Breast epithelium (tissue), 4 donors: ENCODE measurements at regions of chr11 and their contacts with region 1.

Region 1: GRCh38 chr11:62823677-62824076 is 8.2 kb downstream of the STX5 start:
- DNase-seq: no peak
- H3K4me3 ChIP-seq: no peak overlapping the region
- H3K27ac ChIP-seq: no peak overlapping the region
- H3K4me1 ChIP-seq: no peaks in the 10 kb centered on the region
- H3K27me3 ChIP-seq: no peaks in the 10 kb centered on the region
- CTCF ChIP-seq: no peak
- POLR2A ChIP-seq: no peak

Region 2: GRCh38 chr11:63243533-63243932 is 419.9 kb after region 1 on chr11 and contains the start of gene SLC22A25:
- intact Hi-C with region 1: loop called (anchors 10 kb)
- DNase-seq: no peak
- H3K4me3 ChIP-seq: no peak within 1 kb of the TSS
- H3K27ac ChIP-seq: no peak within 1 kb of the TSS
- H3K4me1 ChIP-seq: no peaks in the 10 kb centered on the region
- H3K27me3 ChIP-seq: no peaks in the 10 kb centered on the region
- CTCF ChIP-seq: no peak
- POLR2A ChIP-seq: no peak
- total RNA-seq, gene SLC22A25: 0.48 TPM in 1 of 3 donors, not detected in the others

Region 3: DNA sequence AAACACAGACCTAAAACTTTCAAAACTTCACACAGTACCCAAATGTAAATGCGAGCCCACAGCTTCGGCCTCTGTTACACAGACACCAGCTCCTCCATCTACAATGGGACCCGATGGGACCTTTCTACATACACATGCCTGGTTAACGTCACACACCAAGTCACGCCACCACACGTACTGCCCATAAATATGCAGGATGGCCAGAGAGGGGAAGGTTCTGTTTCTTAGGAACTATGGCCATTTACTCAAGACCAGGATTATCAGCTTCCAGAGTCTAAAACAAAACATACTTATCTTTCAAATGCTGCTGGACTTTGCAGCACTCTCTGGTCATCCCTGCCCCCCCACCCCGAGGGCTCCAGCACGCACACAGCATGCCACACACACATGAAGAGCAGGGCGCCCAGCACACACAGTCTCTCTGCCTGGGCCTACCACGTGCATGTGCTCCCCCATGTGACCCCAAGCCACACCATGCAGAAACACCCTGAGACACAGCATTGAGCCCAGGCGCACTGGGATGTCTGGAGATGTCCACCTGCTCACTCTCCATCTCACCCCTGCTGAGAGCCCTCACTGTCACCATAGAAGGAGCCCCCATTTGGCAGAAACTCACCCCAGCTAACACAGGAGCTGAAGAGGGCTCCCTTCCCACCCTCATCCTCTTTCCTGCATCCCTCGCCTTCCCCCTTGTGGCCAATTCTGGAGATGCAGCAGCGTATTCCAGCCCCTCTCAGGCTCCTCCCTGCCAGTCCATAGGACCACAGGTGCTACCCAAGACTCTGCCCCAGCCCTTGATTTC is 1829.1 kb after region 1 on chr11:
- intact Hi-C with region 1: no loop called
- DNase-seq: peak; percentile 52 to 78
- H3K4me3 ChIP-seq: no peak overlapping the region
- H3K27ac ChIP-seq: no peak overlapping the region
- H3K4me1 ChIP-seq: no peaks in the 10 kb centered on the region
- H3K27me3 ChIP-seq: no peaks in the 10 kb centered on the region
- CTCF ChIP-seq: peak; percentile 89 to 95 (median 92)
- POLR2A ChIP-seq: no peak